ENCODE measurements at regions of chr17 and their contacts with region 1.

Region 1: DNA sequence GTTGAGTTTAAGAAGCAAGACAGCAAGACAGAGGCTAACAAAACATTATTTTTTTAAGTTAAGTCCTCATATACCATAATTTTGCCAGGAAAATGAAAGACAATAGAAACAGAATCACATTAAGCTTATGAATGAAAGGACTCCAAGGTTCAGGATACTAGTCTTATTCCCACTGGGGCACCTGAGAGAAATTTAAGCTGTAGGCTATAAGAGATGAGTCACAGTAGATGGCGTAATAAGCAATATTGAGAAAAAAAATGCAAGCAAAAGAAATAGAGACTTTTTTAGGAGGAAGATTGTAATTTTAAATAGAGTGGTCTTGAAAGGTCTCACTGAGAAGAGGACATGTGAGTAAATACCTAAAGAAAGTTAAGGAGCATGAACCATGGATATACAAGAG is 57.1 kb upstream of the KIF2B start:
- DNase-seq: no peak
- ATAC-seq: no peak
- H3K4me3 ChIP-seq: no peak overlapping the region
- H3K27ac ChIP-seq: no peak overlapping the region
- H3K4me1 ChIP-seq: peaks cover 0 to 3% of the 10 kb centered on the region in 2 experiments; a peak in 2 of 5 replicates
- H3K27me3 ChIP-seq: no peaks in the 10 kb centered on the region
- CTCF ChIP-seq: no peak
- EP300 ChIP-seq: no peak
- POLR2A ChIP-seq: no peak
- RAD21 ChIP-seq: no peak

Region 2: GRCh38 chr17:52653014-52653413 is 1112.6 kb before region 1 on chr17:
- CTCF ChIA-PET with region 1: no interaction called
- POLR2A ChIA-PET with region 1: no interaction called
- in situ Hi-C with region 1: loop called (anchors 10 kb)
- intact Hi-C with region 1: no loop called
- DNase-seq: no peak
- ATAC-seq: no peak
- H3K4me3 ChIP-seq: no peak overlapping the region
- H3K27ac ChIP-seq: no peak overlapping the region
- H3K4me1 ChIP-seq: no peaks in the 10 kb centered on the region
- H3K27me3 ChIP-seq: no peaks in the 10 kb centered on the region
- CTCF ChIP-seq: no peak
- EP300 ChIP-seq: no peak
- POLR2A ChIP-seq: no peak
- RAD21 ChIP-seq: no peak

Region 3: DNA sequence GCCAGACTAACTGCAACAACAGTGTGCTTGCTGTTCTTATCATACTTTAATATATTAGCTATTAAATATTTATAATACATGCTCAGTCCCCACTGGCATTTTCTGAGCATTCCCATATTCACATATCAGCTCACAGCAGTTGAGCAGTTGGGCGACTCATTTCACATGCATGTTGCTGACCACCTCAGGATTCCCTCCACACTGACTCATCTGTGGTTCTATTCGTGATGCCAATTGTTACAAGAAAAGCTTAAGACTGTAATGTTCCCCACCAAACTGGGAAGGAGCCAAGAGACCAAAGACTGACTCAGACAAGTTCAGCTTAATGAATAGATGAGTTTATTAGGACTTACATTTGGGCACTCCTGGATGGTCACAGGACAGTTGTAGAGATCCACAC is 43.2 kb before region 1 on chr17:
- CTCF ChIA-PET with region 1: no interaction called
- POLR2A ChIA-PET with region 1: no interaction called
- in situ Hi-C with region 1: no loop called
- intact Hi-C with region 1: no loop called
- DNase-seq: peak in 1 of 4 experiments; percentile 12
- ATAC-seq: no peak
- H3K4me3 ChIP-seq: no peak overlapping the region
- H3K27ac ChIP-seq: no peak overlapping the region
- H3K4me1 ChIP-seq: no peaks in the 10 kb centered on the region
- H3K27me3 ChIP-seq: no peaks in the 10 kb centered on the region
- CTCF ChIP-seq: no peak
- EP300 ChIP-seq: no peak
- POLR2A ChIP-seq: no peak
- RAD21 ChIP-seq: no peak